ENCODE measurements at regions of chr6 and their contacts with region 1.

Region 1: GRCh38 chr6:167745735-167746605 is 80.7 kb upstream of the AFDN start:
- DNase-seq: no peak
- H3K4me3 ChIP-seq: no peak overlapping the region
- H3K27ac ChIP-seq: peak overlapping the region; percentile 29 to 59
- H3K4me1 ChIP-seq: peaks cover 0 to 7% of the 10 kb centered on the region in 2 donors
- H3K27me3 ChIP-seq: no peaks in the 10 kb centered on the region
- CTCF ChIP-seq: no peak
- POLR2A ChIP-seq: no peak

Region 2: GRCh38 chr6:167683028-167683862 is 62.7 kb before region 1 on chr6:
- intact Hi-C with region 1: loop called (anchors 2 kb)
- DNase-seq: peak in 1 of 2 donors; percentile 81
- H3K4me3 ChIP-seq: no peak overlapping the region
- H3K27ac ChIP-seq: peak overlapping the region; percentile 79 to 88
- H3K4me1 ChIP-seq: peaks cover 0 to 9% of the 10 kb centered on the region in 2 donors
- H3K27me3 ChIP-seq: peaks cover 0 to 2% of the 10 kb centered on the region in 2 donors
- CTCF ChIP-seq: no peak
- POLR2A ChIP-seq: no peak